A549 (cell line): ENCODE measurements at regions of chr4 and their contacts with region 1.

Region 1: GRCh38 chr4:41281038-41281634 is 24.4 kb downstream of the UCHL1 start:
- DNase-seq: peak; percentile 81 to 84
- ATAC-seq: peak; percentile 96 to 97
- H3K4me3 ChIP-seq: no peak overlapping the region
- H3K27ac ChIP-seq: peak overlapping the region; percentile 18 to 62; a peak in 5 of 6 replicates
- H3K4me1 ChIP-seq: peaks cover 30% of the 10 kb centered on the region
- CTCF ChIP-seq: peak; percentile 78
- EP300 ChIP-seq: no peak
- POLR2A ChIP-seq: no peak
- RAD21 ChIP-seq: peak; percentile 93 to 98

Region 2: DNA sequence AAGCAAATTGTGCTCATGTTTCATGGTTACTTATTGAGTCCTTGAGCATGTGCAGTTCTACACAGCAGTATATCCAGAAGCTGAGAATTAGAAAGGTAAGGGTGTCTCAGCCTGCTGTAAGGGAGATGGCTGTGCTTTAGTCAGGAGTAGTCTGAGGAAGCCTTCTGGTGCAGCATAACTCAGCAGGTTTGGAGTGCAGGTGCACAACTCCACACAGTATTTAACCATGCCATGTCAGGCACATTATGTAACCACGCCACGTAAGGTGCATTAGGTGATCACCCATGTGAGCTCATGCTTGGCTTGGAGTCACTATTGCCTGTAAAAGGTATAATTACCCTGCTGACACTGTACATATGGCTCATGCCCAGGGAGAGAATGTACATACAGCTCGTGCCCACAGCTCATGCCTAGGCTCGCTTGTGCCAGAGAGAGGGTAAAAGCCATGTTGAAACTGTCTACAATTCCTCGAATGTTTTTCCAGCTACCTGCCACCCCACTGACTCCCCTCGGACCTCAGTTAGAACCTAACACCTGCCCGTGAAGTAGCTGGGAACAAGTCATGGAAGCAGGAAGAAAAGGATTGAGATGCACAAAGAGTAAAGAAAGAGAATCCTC is 13.4 kb after region 1 on chr4:
- CTCF ChIA-PET with region 1: interaction called, 15 read pairs
- POLR2A ChIA-PET with region 1: no interaction called
- DNase-seq: peak in 1 of 2 experiments; percentile 61
- ATAC-seq: no peak
- H3K4me3 ChIP-seq: no peak overlapping the region
- H3K27ac ChIP-seq: no peak overlapping the region
- H3K4me1 ChIP-seq: no peaks in the 10 kb centered on the region
- CTCF ChIP-seq: no peak
- EP300 ChIP-seq: no peak
- POLR2A ChIP-seq: no peak
- RAD21 ChIP-seq: no peak

Region 3: DNA sequence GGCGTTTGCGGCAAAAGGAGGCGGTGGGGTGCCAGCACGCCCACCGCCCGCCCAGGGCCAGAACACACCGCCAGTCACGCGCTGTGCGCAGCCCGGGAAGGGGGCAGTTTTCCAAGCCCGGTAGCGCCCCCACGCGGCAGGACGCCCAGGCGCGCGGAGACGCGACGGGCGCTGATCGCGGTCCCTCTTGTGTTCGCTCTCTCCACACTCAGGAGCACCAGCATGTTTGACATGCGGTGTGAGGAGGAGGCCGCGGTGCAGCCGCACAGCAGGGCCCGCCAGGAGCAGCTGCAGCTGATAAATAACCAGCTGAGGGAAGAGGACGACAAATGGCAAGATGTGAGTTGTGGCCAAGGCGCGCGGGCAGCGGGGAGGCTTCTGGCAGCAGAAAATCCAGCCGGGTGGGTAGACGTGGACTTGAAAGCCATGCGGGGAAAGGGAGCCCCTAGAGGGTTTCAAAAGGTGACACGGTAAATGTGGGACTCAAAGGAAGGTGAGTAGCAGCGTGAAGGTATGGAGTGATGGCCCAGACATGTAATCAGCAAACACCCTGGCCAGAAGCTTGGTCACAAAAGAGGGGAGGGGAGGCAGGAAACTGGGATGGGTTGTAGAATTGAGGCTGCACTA is 363.3 kb after region 1 on chr4:
- CTCF ChIA-PET with region 1: interaction called, 11 read pairs
- POLR2A ChIA-PET with region 1: no interaction called
- DNase-seq: peak in 1 of 2 experiments; percentile 31
- ATAC-seq: peak in 1 of 2 experiments; percentile 79; a peak in 3 of 6 replicates
- H3K4me3 ChIP-seq: no peak overlapping the region
- H3K27ac ChIP-seq: peak overlapping the region in 1 of 2 experiments; percentile 39; a peak in 1 of 6 replicates
- H3K4me1 ChIP-seq: peaks cover 17% of the 10 kb centered on the region
- CTCF ChIP-seq: peak; percentile 30; the same call in 2 of the 3 replicates
- EP300 ChIP-seq: no peak
- POLR2A ChIP-seq: no peak
- RAD21 ChIP-seq: peak; percentile 29 to 32; a peak in 1 of 5 replicates

Region 4: GRCh38 chr4:41661442-41662076 is 380.4 kb after region 1 on chr4:
- CTCF ChIA-PET with region 1: interaction called, 81 read pairs
- POLR2A ChIA-PET with region 1: no interaction called
- DNase-seq: peak; percentile 35 to 50
- ATAC-seq: peak; percentile 80 to 81
- H3K4me3 ChIP-seq: no peak overlapping the region
- H3K27ac ChIP-seq: peak overlapping the region; percentile 41 to 64; a peak in 4 of 6 replicates
- H3K4me1 ChIP-seq: peaks cover 22% of the 10 kb centered on the region; the same call in 2 of the 3 replicates
- CTCF ChIP-seq: peak; percentile 80
- EP300 ChIP-seq: no peak
- POLR2A ChIP-seq: no peak
- RAD21 ChIP-seq: peak; percentile 82 to 83

Region 5: GRCh38 chr4:41887821-41888686 is 606.9 kb after region 1 on chr4:
- CTCF ChIA-PET with region 1: interaction called, 19 read pairs
- POLR2A ChIA-PET with region 1: no interaction called
- DNase-seq: peak in 1 of 2 experiments; percentile 42
- ATAC-seq: no peak
- H3K4me3 ChIP-seq: no peak overlapping the region
- H3K27ac ChIP-seq: no peak overlapping the region
- H3K4me1 ChIP-seq: no peaks in the 10 kb centered on the region
- CTCF ChIP-seq: peak; percentile 83
- EP300 ChIP-seq: no peak
- POLR2A ChIP-seq: no peak
- RAD21 ChIP-seq: peak; percentile 62 to 67